HEK293T (cell line): ENCODE measurements at regions of chr15 and their contacts with region 1.

Region 1: DNA sequence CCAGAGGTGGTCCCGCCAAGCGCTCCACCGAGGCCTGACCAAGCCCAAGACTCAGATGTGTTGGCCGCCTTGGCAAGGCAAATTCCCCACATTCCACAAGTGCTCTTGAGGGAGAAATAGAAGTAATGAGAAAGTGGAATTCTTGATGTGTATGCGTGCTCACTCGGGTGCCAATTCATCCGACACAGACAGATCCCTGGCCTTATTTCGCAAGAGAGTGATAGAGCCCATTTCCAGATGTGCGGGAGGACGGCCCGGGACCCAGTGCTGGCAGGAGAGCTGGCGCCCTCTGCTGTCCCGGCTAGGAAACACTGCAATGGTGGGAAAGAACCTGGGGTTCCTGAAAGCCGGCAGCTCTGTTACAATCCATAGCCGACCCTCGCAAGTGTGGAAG is 76.0 kb downstream of the HMG20A start:
- DNase-seq: peak; percentile 90

Region 2: DNA sequence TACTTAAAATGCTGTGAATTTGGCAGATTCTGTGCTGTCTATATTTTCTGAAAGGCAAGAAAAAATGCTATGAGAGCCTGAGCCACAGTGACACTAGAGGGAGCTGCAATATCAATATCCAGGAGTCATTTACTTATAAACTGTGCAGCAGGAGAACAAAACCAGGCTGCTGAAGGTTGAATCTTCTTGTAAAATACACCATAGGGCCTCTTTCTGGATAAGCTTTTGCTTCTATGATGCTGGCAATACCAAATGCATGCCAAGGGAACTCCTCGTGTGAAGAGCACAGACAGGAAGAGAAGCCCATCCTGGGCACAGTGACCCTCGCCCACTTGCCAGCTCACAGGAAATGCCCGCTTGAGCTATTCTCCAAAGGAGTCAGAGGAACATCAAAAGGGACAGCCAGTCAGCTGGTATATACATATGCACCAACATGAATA is 377.8 kb before region 1 on chr15:
- CTCF ChIA-PET with region 1: interaction called, 15 read pairs
- POLR2A ChIA-PET with region 1: no interaction called
- DNase-seq: peak; percentile 65

Region 3: DNA sequence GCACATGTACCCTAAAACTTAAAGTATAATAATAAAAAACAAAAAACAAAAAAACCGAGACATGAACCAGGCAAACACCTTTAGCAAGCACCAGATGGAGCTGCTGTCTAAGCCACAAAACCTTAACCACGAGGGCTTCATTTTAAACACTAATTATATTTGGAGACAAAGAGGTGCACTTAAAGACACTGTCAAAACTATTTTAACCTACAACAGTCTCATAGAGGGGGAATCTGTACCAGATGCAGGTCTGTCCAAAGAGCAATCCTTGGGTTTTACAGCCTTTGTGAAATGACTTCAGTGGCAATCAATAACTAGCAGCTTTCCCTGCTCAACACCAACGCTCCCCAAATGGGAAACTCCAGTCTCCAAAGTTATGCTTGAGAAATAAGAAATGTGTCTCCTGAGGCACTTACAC is 310.1 kb before region 1 on chr15:
- CTCF ChIA-PET with region 1: interaction called, 14 read pairs
- POLR2A ChIA-PET with region 1: no interaction called
- DNase-seq: peak; percentile 22

Region 4: DNA sequence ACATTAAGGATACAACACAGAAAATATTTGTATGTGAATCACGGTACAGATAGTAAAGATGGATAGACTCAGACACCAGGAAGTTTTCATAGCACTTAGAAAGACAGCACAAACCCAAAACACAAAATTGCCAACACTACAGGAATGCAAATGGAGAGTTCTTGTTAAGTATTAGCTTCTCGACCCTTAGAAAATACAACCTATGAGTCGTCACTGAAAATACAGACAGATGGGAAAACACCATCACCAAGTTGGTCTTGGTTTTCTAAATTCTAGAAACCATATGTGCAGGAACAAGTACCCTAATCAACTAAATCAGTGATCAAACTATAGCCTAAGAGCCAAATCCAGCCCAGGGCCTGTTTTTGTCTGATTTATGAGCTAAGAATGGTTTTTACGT is 127.5 kb before region 1 on chr15:
- CTCF ChIA-PET with region 1: no interaction called
- POLR2A ChIA-PET with region 1: no interaction called
- DNase-seq: no peak

Region 5: DNA sequence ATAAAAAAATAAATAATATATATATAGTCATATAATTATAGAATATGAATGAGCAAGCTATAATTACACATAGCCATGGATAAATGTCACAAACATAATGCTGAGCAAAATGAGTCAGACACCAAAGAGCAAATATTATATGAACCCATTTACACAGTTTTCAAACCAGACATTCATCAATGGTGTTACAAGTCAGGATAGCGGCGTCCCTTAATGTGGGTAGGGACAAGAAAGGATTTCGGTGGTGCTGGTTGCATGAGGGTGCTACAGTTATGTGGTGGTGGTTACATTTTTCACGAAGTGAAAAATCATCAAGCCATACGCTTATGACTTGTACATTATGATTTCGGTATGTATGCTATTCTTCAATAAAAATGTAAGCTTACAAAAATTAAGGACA is 24.5 kb after region 1 on chr15:
- CTCF ChIA-PET with region 1: no interaction called
- POLR2A ChIA-PET with region 1: no interaction called
- DNase-seq: no peak

Region 6: DNA sequence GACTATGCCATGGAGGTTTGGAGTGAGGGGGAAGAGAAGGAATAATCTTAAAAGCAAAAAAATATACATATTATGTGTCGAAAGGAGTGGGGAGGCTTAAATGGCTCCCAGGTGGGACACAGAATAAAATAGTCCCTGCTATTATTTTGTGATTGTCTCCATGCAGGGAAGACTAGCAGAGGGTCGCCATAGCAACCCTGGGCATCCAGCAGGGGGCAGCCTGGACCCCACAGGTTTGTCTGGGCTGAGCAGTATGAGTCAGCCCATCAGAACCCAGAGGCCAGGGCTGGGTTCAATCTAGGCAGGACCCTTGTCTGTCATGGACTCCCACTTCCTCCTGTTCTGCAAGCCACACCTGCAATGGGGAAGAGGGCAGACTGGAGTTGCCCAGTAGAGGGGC is 153.6 kb after region 1 on chr15:
- CTCF ChIA-PET with region 1: no interaction called
- POLR2A ChIA-PET with region 1: no interaction called
- DNase-seq: peak; percentile 66